ENCODE measurements at regions of chr1 and their contacts with region 1.

Region 1: DNA sequence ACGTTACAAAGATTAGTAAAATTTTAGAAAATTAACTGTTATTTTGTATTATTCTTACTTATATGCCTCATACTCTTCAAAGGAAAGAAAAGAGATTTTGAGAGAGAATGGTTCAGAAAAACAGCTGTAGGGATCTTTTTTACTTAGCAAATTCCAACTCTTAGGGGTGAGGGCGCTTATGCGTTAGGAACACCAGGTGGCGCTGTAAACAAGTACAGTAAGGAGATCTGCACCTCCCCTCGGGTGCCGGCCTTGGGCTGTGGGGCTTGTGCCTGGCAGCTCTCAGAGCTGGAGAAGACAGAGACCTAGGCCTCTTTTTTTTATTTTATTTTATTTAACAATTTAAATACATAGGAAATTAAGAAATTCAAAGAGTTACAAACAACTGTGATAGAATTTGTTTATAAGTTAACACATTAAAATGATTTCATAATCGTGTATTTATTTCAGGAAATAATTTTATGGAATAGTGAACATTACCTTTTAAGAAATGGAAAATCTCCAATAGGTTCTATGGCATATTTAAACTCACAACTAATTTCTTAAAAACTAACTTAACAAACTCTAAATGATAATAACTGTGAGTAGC is 32.6 kb downstream of the UTP25 start:
- DNase-seq: peak; percentile 51
- H3K4me3 Mint-ChIP-seq: no peak overlapping the region
- H3K27ac Mint-ChIP-seq: no peak overlapping the region
- H3K4me1 Mint-ChIP-seq: no peaks in the 10 kb centered on the region
- H3K27me3 Mint-ChIP-seq: peaks cover 24% of the 10 kb centered on the region

Region 2: DNA sequence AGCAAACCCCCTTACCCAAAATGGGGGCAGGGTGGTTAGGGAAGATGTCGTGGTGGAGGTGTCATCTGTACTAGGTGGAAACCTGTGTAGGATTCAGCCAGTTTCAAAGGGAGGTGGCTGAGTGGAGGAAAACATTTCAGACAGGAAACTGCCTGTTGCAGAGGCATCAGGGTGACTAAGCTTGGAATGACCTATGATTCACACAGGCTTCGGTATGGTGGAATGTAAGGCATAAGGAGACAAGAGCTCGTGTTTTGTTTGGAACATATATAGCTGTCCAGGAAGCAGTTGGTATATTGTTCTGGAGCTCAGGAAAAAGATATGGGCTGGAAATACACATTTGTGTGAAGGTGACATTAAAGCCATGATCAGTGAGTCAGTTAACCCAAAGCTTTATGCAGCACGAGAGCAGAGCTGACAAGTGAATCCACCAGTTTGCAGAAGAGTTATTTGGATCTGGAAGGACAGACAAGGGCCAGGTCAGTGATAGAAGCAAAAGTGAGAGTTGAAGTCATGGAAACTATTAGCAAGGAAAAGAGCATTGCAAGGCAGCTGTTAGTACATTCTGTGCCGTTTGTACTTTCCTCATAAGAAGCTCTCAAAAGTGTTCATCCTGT is 20.4 kb before region 1 on chr1:
- intact Hi-C with region 1: loop called (anchors 2 kb)
- DNase-seq: no peak
- H3K4me3 Mint-ChIP-seq: peak overlapping the region; percentile 49
- H3K27ac Mint-ChIP-seq: peak overlapping the region; percentile 91
- H3K4me1 Mint-ChIP-seq: peaks cover 53% of the 10 kb centered on the region
- H3K27me3 Mint-ChIP-seq: no peaks in the 10 kb centered on the region

Region 3: GRCh38 chr1:209899948-209900347 is 39.6 kb after region 1 on chr1:
- intact Hi-C with region 1: no loop called
- DNase-seq: no peak
- H3K4me3 Mint-ChIP-seq: no peak overlapping the region
- H3K27ac Mint-ChIP-seq: no peak overlapping the region
- H3K4me1 Mint-ChIP-seq: peaks cover 10% of the 10 kb centered on the region
- H3K27me3 Mint-ChIP-seq: peaks cover 8% of the 10 kb centered on the region

Region 4: GRCh38 chr1:209937996-209938959 is 77.9 kb after region 1 on chr1 and contains the start of gene SYT14:
- intact Hi-C with region 1: loop called (anchors 5 kb)
- DNase-seq: no peak
- H3K4me3 Mint-ChIP-seq: peak within 1 kb of the TSS; percentile 63
- H3K27ac Mint-ChIP-seq: no peak within 1 kb of the TSS
- H3K4me1 Mint-ChIP-seq: peaks cover 5% of the 10 kb centered on the region
- H3K27me3 Mint-ChIP-seq: peaks cover 68% of the 10 kb centered on the region
- total RNA-seq, gene SYT14: not detected in 2 replicates

Region 5: GRCh38 chr1:209989525-209989924 is 129.1 kb after region 1 on chr1:
- intact Hi-C with region 1: loop called (anchors 1 kb)
- DNase-seq: no peak
- H3K4me3 Mint-ChIP-seq: no peak overlapping the region
- H3K27ac Mint-ChIP-seq: no peak overlapping the region
- H3K4me1 Mint-ChIP-seq: no peaks in the 10 kb centered on the region
- H3K27me3 Mint-ChIP-seq: peaks cover 12% of the 10 kb centered on the region

Region 6: GRCh38 chr1:210311726-210312493 is 451.5 kb after region 1 on chr1:
- intact Hi-C with region 1: loop called (anchors 2 kb)
- DNase-seq: no peak
- H3K4me3 Mint-ChIP-seq: no peak overlapping the region
- H3K27ac Mint-ChIP-seq: no peak overlapping the region
- H3K4me1 Mint-ChIP-seq: peaks cover 3% of the 10 kb centered on the region
- H3K27me3 Mint-ChIP-seq: peaks cover 41% of the 10 kb centered on the region

Region 7: DNA sequence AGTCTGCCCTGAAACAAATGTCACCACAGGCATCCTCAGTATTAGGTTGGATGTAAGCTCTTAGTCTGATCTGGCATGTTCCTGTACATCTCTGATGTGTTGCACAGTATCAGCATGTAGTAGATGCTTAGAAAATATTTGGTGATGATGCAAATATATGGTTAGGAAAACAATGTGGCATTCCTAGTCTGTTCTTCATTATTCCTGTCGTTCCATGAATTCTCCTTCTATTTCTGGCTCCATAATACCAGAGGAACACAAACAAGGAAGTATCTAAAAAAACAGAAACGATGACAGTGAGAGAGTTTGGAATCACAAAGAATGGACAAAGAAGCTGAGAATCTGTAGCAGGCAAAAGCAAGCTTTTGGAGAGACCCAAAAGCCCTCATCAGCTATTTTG is 704.9 kb after region 1 on chr1:
- intact Hi-C with region 1: no loop called
- DNase-seq: no peak
- H3K4me3 Mint-ChIP-seq: no peak overlapping the region
- H3K27ac Mint-ChIP-seq: no peak overlapping the region
- H3K4me1 Mint-ChIP-seq: no peaks in the 10 kb centered on the region
- H3K27me3 Mint-ChIP-seq: peaks cover 6% of the 10 kb centered on the region